ENCODE measurements at regions of chr1 and their contacts with region 1.

Region 1: GRCh38 chr1:204975570-204976235 is 67.3 kb upstream of the CNTN2 start:
- DNase-seq: peak; percentile 66 to 86 (median 83)
- ATAC-seq: peak; percentile 90
- H3K4me3 ChIP-seq: no peak overlapping the region
- H3K27ac ChIP-seq: no peak overlapping the region
- H3K4me1 ChIP-seq: peaks cover 4 to 12% of the 10 kb centered on the region in 2 experiments; a peak in 3 of 5 replicates
- H3K27me3 ChIP-seq: peaks cover 34 to 74% of the 10 kb centered on the region in 2 experiments
- CTCF ChIP-seq: peak; percentile 85 to 93 (median 90)
- EP300 ChIP-seq: no peak
- POLR2A ChIP-seq: no peak
- RAD21 ChIP-seq: peak; percentile 81 to 93

Region 2: DNA sequence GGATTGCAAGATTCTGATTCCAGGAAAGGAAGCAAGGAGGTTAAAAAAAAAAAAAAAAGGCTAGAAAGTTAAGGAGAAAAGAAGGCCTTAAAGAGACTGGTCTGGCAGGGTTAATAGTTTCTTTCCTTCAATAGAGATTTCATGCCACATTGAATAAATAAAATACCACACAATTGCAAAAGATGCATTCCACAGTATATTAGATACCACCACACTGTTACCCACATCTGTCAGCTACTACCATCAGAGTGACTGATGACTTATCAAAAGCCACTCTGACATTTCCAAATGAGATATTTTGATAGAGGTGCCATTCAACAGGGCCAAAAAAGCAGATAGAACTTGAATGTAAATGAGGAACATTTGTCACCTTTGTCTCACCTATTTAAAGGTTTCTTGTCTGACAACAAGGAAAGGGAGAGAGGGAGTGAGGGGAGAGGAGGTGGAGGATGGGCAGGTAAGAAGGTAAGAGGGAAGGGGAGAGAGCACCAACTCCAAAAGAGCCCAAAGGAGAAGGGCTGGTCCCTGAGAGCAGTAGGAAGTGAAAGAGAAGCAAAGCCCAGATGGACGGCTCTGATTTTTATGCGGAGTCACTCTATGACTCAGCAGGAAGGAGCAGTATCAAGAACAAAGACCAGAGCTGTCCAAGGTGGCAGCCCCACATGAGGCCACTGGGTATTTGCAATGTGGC is 328.4 kb before region 1 on chr1:
- CTCF ChIA-PET with region 1: no interaction called
- POLR2A ChIA-PET with region 1: no interaction called
- in situ Hi-C with region 1: no loop called
- intact Hi-C with region 1: no loop called
- DNase-seq: peak; percentile 92 to 93 (median 92)
- ATAC-seq: peak; percentile 99
- H3K4me3 ChIP-seq: no peak overlapping the region
- H3K27ac ChIP-seq: peak overlapping the region; percentile 17; the same call in 2 of the 3 replicates
- H3K4me1 ChIP-seq: peaks cover 3 to 5% of the 10 kb centered on the region in 2 experiments; a peak in 3 of 5 replicates
- H3K27me3 ChIP-seq: peaks cover 21 to 42% of the 10 kb centered on the region in 2 experiments; a peak in 4 of 5 replicates
- CTCF ChIP-seq: no peak
- EP300 ChIP-seq: peak; percentile 78
- POLR2A ChIP-seq: no peak
- RAD21 ChIP-seq: peak in 1 of 2 experiments; percentile 33; a peak in 2 of 4 replicates

Region 3: GRCh38 chr1:205061665-205062069 is 86.0 kb after region 1 on chr1:
- CTCF ChIA-PET with region 1: interaction called, 6 read pairs
- POLR2A ChIA-PET with region 1: no interaction called
- in situ Hi-C with region 1: loop called (anchors 5 kb)
- intact Hi-C with region 1: loop called (anchors 1 kb)
- DNase-seq: peak; percentile 80 to 85 (median 82)
- ATAC-seq: peak; percentile 85
- H3K4me3 ChIP-seq: no peak overlapping the region
- H3K27ac ChIP-seq: no peak overlapping the region
- H3K4me1 ChIP-seq: peaks cover 0 to 23% of the 10 kb centered on the region in 2 experiments; a peak in 3 of 5 replicates
- H3K27me3 ChIP-seq: peaks cover 39 to 75% of the 10 kb centered on the region in 2 experiments
- CTCF ChIP-seq: peak; percentile 92 to 98 (median 95)
- EP300 ChIP-seq: no peak
- POLR2A ChIP-seq: no peak
- RAD21 ChIP-seq: peak; percentile 82 to 95

Region 4: GRCh38 chr1:205108464-205108863 is 132.8 kb after region 1 on chr1:
- CTCF ChIA-PET with region 1: no interaction called
- POLR2A ChIA-PET with region 1: no interaction called
- in situ Hi-C with region 1: no loop called
- intact Hi-C with region 1: no loop called
- DNase-seq: no peak
- ATAC-seq: peak; percentile 40
- H3K4me3 ChIP-seq: no peak overlapping the region
- H3K27ac ChIP-seq: no peak overlapping the region
- H3K4me1 ChIP-seq: no peaks in the 10 kb centered on the region
- H3K27me3 ChIP-seq: no peaks in the 10 kb centered on the region
- CTCF ChIP-seq: no peak
- EP300 ChIP-seq: no peak
- POLR2A ChIP-seq: no peak
- RAD21 ChIP-seq: no peak

Region 5: GRCh38 chr1:205124726-205125125 is 149.0 kb after region 1 on chr1:
- CTCF ChIA-PET with region 1: no interaction called
- POLR2A ChIA-PET with region 1: no interaction called
- in situ Hi-C with region 1: no loop called
- intact Hi-C with region 1: no loop called
- DNase-seq: no peak
- ATAC-seq: no peak
- H3K4me3 ChIP-seq: no peak overlapping the region
- H3K27ac ChIP-seq: no peak overlapping the region; the same call in 2 of the 3 replicates
- H3K4me1 ChIP-seq: peaks cover 13 to 14% of the 10 kb centered on the region in 2 experiments; a peak in 4 of 5 replicates
- H3K27me3 ChIP-seq: no peaks in the 10 kb centered on the region
- CTCF ChIP-seq: no peak
- EP300 ChIP-seq: no peak
- POLR2A ChIP-seq: no peak
- RAD21 ChIP-seq: no peak

Measured in K562 (cell line).